ENCODE measurements at regions of chr14 and their contacts with region 1.

Region 1: GRCh38 chr14:99141236-99141635 is 130.8 kb downstream of the BCL11B start:
- DNase-seq: peak in 1 of 2 donors; percentile 2
- H3K4me3 ChIP-seq: no peak overlapping the region
- H3K27ac ChIP-seq: no peak overlapping the region
- H3K4me1 ChIP-seq: no peaks in the 10 kb centered on the region
- H3K27me3 ChIP-seq: peaks cover 0 to 12% of the 10 kb centered on the region in 2 donors
- CTCF ChIP-seq: no peak

Region 2: DNA sequence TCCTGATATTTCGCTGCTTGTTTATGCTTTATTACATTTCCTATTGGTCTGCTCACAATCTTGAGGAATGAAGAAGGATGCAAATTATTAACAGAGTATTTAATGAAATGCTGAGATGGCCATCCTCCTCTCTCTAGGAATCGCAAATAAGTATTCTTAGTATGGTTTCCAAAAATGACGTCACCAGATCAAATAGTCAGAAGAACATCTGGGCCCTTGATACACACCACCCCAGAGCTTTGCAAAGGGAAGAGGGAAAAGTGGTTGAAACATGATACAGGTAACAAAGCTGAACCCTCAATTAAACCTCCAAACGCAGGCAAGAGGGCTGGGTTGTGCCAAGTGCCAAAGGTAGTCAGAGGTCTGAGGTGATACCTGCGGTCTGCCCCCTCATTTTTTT is 23.5 kb after region 1 on chr14:
- intact Hi-C with region 1: loop called (anchors 1 kb)
- DNase-seq: no peak
- H3K4me3 ChIP-seq: no peak overlapping the region
- H3K27ac ChIP-seq: no peak overlapping the region
- H3K4me1 ChIP-seq: no peaks in the 10 kb centered on the region
- H3K27me3 ChIP-seq: peaks cover 0 to 17% of the 10 kb centered on the region in 2 donors
- CTCF ChIP-seq: no peak